SK-N-SH (cell line): ENCODE measurements at regions of chr20 and their contacts with region 1.

Region 1: GRCh38 chr20:17504898-17505635 is 26.1 kb downstream of the BFSP1 start:
- DNase-seq: peak; percentile 59
- H3K4me3 ChIP-seq: peak overlapping the region; percentile 35 to 52
- H3K27ac ChIP-seq: no peak overlapping the region
- H3K4me1 ChIP-seq: peaks cover 0 to 9% of the 10 kb centered on the region in 2 experiments; a peak in 1 of 4 replicates
- H3K27me3 ChIP-seq: no peaks in the 10 kb centered on the region
- CTCF ChIP-seq: peak; percentile 71
- EP300 ChIP-seq: no peak
- RAD21 ChIP-seq: peak; percentile 83

Region 2: DNA sequence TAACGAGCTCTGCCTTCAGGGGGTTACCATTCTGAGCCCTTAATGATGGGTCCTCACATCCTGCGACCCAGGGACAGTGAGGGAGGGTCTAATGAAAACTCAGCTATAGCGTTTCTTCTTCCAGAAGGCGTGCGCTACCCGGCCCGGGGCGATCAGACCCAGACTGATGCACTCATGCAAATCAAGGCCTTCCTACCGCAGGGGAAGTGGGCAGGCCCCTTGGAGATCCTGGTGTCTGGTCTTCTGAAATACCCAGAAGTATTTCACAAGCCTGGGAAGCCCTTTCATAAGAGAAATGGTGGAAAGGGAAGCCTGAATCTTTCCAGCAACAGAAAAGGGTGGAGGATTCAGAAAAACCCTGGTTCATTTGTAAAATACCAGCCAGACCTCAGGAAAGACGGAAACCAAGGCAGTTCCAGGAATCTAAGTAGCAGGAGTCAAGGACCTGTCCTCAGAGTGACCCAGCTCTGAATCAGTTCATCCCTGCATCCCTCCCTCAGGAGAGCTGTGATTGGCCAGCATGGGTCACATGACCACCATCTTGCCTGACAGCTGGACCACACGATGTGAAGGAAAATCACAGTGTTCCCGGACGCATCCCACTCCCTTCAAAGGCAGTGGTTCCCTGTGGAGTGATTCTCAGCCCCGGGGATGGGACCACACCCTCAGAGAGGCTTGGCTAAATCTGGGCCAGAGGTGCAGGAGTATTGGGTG is 13.4 kb after region 1 on chr20:
- CTCF ChIA-PET with region 1: interaction called, 26 read pairs
- POLR2A ChIA-PET with region 1: no interaction called
- DNase-seq: peak; percentile 45
- H3K4me3 ChIP-seq: no peak overlapping the region
- H3K27ac ChIP-seq: no peak overlapping the region
- H3K4me1 ChIP-seq: peaks cover 0 to 3% of the 10 kb centered on the region in 2 experiments; a peak in 1 of 4 replicates
- H3K27me3 ChIP-seq: no peaks in the 10 kb centered on the region
- CTCF ChIP-seq: no peak
- EP300 ChIP-seq: no peak
- RAD21 ChIP-seq: no peak

Region 3: GRCh38 chr20:17542993-17543412 is 37.9 kb after region 1 on chr20:
- CTCF ChIA-PET with region 1: interaction called, 17 read pairs
- POLR2A ChIA-PET with region 1: no interaction called
- DNase-seq: no peak
- H3K4me3 ChIP-seq: peak overlapping the region in 1 of 2 experiments; percentile 7; a peak in 1 of 4 replicates
- H3K27ac ChIP-seq: peak overlapping the region; percentile 70 to 96; a peak in 3 of 4 replicates
- H3K4me1 ChIP-seq: peaks cover 0 to 15% of the 10 kb centered on the region in 2 experiments; a peak in 2 of 4 replicates
- H3K27me3 ChIP-seq: no peaks in the 10 kb centered on the region
- CTCF ChIP-seq: no peak
- EP300 ChIP-seq: peak in 1 of 2 experiments; percentile 14; a peak in 1 of 4 replicates
- RAD21 ChIP-seq: no peak

Region 4: DNA sequence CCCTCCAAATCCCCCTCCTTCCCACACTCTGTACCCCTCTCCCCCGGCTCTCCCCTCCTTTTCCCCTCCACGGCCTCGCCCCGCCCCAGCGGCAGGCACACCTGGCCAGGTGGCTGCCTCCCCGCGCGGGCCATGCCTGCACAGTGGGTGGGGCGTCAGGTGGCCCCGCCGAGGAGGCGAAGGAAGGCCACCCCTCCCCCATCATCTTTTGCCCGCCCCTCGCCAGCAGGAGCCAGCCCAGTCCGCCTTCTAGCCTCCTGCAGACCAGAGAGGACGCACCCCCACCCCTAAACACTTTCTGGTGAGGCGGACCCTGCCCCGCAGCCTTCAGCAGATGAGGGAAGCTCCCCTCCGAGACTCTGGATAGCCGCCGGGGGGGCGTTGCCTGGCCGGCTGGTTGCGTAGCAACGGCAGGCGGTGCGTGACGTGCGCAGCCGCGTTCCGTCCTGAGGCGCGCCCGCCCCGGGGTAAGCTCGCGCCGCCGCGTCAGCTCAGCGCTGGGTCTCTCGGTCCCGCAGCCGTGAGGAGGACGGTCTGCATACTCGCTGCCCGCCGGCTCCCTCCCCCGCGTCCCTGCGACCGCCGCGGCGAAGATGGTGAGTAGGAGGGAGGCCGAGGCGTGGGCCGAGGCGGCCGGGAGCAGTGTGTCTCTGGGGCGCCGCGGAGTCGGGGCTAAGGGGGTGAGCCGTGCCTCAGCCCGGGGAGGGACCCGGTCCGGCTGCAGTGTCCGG is 64.7 kb after region 1 on chr20 and contains the start of gene DSTN:
- CTCF ChIA-PET with region 1: interaction called, 11 read pairs
- POLR2A ChIA-PET with region 1: interaction called, 3 read pairs
- DNase-seq: peak; percentile 94
- H3K4me3 ChIP-seq: peak within 1 kb of the TSS; percentile 92 to 97
- H3K27ac ChIP-seq: peak within 1 kb of the TSS; percentile 93 to 99
- H3K4me1 ChIP-seq: peaks cover 3 to 10% of the 10 kb centered on the region in 2 experiments; a peak in 3 of 4 replicates
- H3K27me3 ChIP-seq: no peaks in the 10 kb centered on the region
- CTCF ChIP-seq: no peak
- EP300 ChIP-seq: no peak
- RAD21 ChIP-seq: no peak
- polyA plus RNA-seq, gene DSTN: 151 and 167 TPM in 2 replicates

Region 5: DNA sequence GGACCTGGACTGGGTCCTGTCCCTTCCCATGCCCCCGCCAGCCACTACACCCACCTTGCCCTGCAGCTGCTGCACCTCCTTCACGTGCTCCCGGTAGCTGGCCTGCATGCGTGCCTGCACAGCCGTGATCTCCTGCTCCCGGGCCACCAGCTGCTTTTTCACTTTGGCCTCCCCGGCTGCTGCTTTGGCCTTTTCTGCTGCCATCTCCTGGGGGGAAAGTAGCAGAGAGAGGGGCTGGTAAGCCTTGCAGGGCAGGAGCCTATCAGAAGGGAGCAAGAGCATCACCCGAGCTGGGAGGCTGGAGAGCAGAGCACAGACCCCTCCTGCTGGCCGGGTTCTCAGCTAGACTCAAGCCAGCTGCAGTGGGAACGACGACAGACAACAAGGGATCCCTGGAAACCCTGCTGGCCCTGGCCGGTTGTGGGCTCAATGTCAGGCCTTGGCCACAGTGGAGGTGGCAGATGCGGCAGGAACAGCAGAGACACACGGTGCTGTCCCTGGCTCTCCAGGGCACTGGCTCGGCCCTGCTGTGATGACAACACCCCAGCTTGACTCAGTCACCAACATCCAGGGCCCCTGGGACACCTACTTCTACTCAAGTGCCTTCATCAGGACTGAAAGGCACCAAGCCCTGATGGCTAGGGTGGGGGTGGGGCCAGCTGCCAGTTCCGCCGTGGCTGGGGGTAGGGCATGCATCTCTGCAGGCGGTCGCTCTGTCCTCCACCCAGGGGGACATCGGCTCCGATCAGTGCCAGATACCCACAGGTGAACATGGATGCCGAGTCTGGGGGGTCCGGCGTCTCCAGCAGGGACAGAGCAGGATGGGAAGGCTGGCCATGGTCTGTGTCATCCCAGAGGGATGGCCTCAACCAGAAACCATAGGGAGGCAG is 131.7 kb after region 1 on chr20:
- CTCF ChIA-PET with region 1: interaction called, 10 read pairs
- POLR2A ChIA-PET with region 1: no interaction called
- DNase-seq: peak; percentile 91
- H3K4me3 ChIP-seq: no peak overlapping the region
- H3K27ac ChIP-seq: peak overlapping the region in 1 of 2 experiments; percentile 8; a peak in 1 of 4 replicates
- H3K4me1 ChIP-seq: peaks cover 0 to 20% of the 10 kb centered on the region in 2 experiments; a peak in 1 of 4 replicates
- H3K27me3 ChIP-seq: no peaks in the 10 kb centered on the region
- CTCF ChIP-seq: no peak
- EP300 ChIP-seq: no peak
- RAD21 ChIP-seq: peak; percentile 61

Region 6: DNA sequence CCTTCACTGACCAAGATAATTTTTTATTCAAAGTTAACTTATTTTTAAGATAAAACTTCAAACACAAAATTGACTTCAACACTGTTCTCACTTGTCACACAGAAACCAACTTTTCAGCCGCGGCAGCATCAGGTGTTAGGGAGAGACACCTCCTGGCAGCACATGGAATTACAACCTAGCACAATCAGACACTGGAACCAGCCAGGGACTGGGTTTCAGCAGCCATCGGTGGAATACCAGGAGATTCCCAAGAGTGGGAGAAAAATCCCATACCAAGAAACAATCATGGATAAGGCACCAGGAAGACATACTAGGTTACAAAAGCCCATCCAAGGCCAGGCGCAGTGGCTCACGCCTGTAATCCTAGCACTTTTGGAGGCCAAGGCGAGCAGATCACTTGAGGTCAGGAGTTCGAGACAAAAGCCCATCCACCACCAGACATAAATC is 393.5 kb after region 1 on chr20:
- CTCF ChIA-PET with region 1: interaction called, 14 read pairs
- POLR2A ChIA-PET with region 1: no interaction called
- DNase-seq: peak; percentile 69
- H3K4me3 ChIP-seq: no peak overlapping the region; a peak in 1 of 4 replicates
- H3K27ac ChIP-seq: no peak overlapping the region
- H3K4me1 ChIP-seq: peaks cover 2 to 5% of the 10 kb centered on the region in 2 experiments; a peak in 2 of 4 replicates
- H3K27me3 ChIP-seq: no peaks in the 10 kb centered on the region
- CTCF ChIP-seq: peak; percentile 91
- EP300 ChIP-seq: no peak
- RAD21 ChIP-seq: peak; percentile 95

Region 7: DNA sequence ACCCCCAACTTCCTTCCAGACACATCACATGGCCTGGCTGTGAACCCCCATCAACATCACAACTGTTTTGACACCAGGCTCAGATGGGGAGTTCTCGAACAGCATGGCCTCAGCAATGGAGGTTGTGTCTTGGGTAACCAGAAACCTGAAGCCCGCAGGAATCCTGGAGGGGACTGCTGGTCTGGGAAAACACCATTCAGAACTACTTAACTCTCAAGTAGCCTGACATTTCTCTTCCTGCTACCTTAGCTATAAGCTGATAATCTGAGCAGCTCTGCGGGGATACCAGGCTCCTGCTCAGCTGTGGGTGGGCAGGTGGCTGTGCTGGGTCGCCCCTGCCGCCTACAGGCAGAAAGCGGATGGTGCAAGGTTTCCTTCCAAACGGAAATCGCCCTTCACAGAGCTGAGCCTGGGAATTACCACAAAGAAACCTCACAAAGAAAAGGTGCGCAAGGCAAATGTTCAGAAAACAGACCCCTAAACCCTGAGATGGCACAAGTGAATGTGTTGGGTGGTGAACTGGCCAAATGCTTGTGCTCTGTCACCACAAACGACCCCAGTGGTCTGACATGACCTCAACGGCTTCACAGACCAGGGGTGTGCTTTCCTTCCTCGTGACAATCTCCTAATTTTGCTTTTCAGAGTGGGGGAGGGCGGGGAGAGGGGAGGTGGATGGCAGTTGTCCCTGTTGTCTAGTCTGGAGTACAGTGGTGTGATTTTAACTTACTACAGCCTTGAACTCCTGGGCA is 434.0 kb after region 1 on chr20:
- CTCF ChIA-PET with region 1: interaction called, 14 read pairs
- POLR2A ChIA-PET with region 1: no interaction called
- DNase-seq: peak; percentile 80
- H3K4me3 ChIP-seq: no peak overlapping the region; a peak in 1 of 4 replicates
- H3K27ac ChIP-seq: no peak overlapping the region
- H3K4me1 ChIP-seq: peaks cover 0 to 11% of the 10 kb centered on the region in 2 experiments; a peak in 1 of 4 replicates
- H3K27me3 ChIP-seq: no peaks in the 10 kb centered on the region
- CTCF ChIP-seq: peak; percentile 77
- EP300 ChIP-seq: no peak
- RAD21 ChIP-seq: peak; percentile 84